HCT116 (cell line): ENCODE measurements at regions of chr16 and their contacts with region 1.

Region 1: DNA sequence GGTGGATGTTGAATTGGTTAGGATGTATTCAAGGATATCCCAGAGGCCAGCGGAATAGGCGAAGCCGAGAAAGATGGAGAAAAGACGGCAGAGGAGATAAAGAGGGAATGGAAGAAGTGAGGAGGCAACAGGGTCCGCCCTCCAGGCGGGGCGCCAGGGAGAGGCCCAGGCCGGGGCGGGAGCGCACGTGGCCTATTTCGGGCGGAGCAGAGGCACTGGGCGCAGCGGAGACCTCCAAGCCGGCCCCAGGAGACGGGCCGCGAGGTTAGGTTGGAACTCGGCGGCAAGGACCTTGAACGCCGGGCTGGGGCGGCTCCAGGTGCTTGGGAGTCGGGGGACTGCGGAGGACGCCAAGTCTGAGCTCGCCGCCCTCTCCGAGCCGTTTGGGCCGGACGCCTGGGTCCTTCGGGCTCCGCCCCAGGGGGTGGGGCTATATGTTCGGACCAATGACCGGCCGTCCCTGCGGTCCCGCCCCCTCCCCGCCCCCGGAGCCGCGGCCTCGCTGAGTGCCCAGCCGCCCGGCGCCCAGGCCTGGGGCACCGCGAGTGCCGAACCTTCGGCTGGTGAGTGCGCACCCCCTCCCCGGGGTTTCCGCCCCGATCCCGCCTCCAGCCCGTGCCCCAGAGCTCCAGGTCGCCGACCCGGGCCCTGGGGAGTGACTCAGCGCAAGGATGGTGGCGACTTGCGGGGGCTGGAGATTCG is at the start of gene ZNF771:
- DNase-seq: peak; percentile 73
- ATAC-seq: peak; percentile 87
- H3K4me3 ChIP-seq: peak within 1 kb of the TSS; percentile 80 to 93
- H3K27ac ChIP-seq: peak within 1 kb of the TSS; percentile 87
- H3K4me1 ChIP-seq: peaks cover 18 to 26% of the 10 kb centered on the region in 2 experiments
- H3K27me3 ChIP-seq: no peaks in the 10 kb centered on the region
- CTCF ChIP-seq: no peak
- POLR2A ChIP-seq: peak; percentile 35
- RAD21 ChIP-seq: no peak
- total RNA-seq, gene ZNF771: 11.0 TPM

Region 2: DNA sequence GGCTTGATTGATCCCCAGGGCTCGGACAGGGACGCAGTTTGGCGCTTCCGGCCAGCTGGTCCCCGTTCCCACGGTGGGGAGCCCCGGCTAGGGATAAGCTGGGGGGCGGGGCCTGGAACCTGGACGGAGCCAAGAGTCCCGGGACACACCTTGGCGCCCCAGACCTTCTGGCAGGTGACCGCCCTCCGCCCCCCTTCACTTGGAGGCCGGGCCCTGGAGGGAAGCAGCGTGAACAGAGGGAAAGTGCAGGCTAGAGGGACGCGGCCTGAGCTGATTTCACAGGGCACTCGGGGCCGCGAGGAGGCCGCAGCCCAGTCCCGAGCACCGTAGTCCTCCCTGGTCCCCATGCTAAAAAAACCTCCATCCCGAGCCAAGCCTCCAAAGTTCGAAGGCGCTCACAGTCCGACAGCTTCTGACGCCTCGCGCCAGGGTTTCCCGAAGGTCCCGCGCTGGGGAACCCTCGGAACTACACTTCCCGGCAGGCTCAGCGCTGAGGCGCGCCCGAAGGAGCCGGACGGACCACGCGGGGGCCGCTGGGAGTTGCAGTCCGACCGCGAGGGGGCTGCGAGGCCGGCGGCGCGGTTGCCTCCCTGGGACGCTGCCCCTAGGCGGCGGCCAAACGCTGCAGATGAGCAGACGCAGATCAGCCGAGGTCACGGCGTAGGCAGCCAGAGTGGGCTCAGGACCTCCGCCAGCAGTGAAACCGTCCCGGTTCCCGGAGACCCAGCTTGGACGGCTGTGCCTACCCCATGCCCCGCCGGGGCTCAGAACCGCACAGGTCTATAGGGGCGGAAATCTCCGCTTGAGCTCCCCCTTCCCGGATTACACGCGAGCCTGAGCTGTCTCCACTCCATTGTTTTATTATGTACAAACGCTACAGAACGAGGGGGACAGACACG is 315.5 kb before region 1 on chr16 and contains the start of gene TBX6:
- CTCF ChIA-PET with region 1: interaction called, 4 read pairs
- POLR2A ChIA-PET with region 1: interaction called, 3 read pairs
- RAD21 ChIA-PET with region 1: no interaction called
- intact Hi-C with region 1: loop called (anchors 5 kb)
- DNase-seq: peak; percentile 74
- ATAC-seq: peak; percentile 89
- H3K4me3 ChIP-seq: peak within 1 kb of the TSS; percentile 62 to 68
- H3K27ac ChIP-seq: peak within 1 kb of the TSS; percentile 77
- H3K4me1 ChIP-seq: peaks cover 14 to 62% of the 10 kb centered on the region in 2 experiments
- H3K27me3 ChIP-seq: no peaks in the 10 kb centered on the region
- CTCF ChIP-seq: peak; percentile 44 to 76 (median 63); a peak in 5 of 6 replicates
- POLR2A ChIP-seq: peak; percentile 4
- RAD21 ChIP-seq: peak; percentile 86
- total RNA-seq, gene TBX6: 1.4 TPM

Region 3: GRCh38 chr16:30142672-30143346 is 264.4 kb before region 1 on chr16:
- CTCF ChIA-PET with region 1: interaction called, 10 read pairs
- POLR2A ChIA-PET with region 1: no interaction called
- RAD21 ChIA-PET with region 1: interaction called in 1 of 2 experiments, 4 read pairs
- intact Hi-C with region 1: no loop called
- DNase-seq: no peak
- ATAC-seq: peak; percentile 81
- H3K4me3 ChIP-seq: no peak overlapping the region
- H3K27ac ChIP-seq: no peak overlapping the region
- H3K4me1 ChIP-seq: no peaks in the 10 kb centered on the region
- H3K27me3 ChIP-seq: no peaks in the 10 kb centered on the region
- CTCF ChIP-seq: peak; percentile 25 to 58 (median 48); a peak in 4 of 6 replicates
- POLR2A ChIP-seq: no peak
- RAD21 ChIP-seq: peak; percentile 81

Region 4: DNA sequence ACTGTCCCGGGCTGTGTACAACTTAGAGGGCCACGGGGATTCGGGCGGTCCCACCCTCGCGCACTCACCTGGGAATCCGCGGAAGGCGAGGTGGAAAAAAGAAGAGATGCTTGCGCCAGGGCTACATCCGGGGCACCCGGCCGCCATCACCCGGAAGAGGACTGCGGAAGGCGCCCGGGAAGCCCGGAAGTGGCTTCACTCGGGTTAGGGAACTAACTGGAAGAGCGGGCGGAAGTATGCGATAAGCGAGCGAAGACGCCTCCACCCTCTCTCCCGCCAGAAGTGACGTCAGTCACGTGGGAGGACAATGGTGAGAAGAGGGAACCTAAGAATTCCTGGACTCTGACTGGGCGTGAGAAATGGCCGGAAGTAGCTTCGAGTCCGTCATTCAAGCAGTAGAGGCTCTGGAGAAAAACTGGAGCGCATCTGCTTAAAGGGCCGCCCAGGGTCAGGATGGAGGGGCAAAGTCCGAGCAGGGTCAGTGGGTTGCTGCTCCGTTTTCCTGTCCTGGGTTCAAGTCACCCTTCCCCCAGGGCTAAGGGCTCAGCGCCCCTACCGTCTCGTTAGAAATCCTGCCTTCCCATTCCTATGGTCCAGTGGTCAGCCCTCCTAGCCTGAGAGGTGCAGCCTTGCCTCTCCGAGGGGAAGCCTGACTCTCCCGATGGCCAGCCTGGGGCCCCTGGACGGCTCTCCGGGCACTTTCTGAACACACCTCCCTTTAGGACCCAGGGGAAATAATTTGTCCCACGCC is 51.9 kb before region 1 on chr16 and contains the start of gene CD2BP2:
- CTCF ChIA-PET with region 1: interaction called, 10 read pairs
- POLR2A ChIA-PET with region 1: no interaction called
- RAD21 ChIA-PET with region 1: no interaction called
- intact Hi-C with region 1: no loop called
- DNase-seq: peak; percentile 99
- ATAC-seq: peak; percentile 81
- H3K4me3 ChIP-seq: peak within 1 kb of the TSS; percentile 86 to 92
- H3K27ac ChIP-seq: peak within 1 kb of the TSS; percentile 92
- H3K4me1 ChIP-seq: peaks cover 39 to 54% of the 10 kb centered on the region in 2 experiments
- H3K27me3 ChIP-seq: no peaks in the 10 kb centered on the region
- CTCF ChIP-seq: 0 out of 6 replicates have a peak, but pooled peaks of 1 of the 3 experiments have one; percentile 18
- POLR2A ChIP-seq: no peak
- RAD21 ChIP-seq: no peak; the same call in 1 of the 2 replicates
- total RNA-seq, gene CD2BP2: 51.8 TPM

Region 5: GRCh38 chr16:30370444-30371247 is 36.6 kb before region 1 on chr16 and contains the start of gene TBC1D10B:
- CTCF ChIA-PET with region 1: interaction called, 17 read pairs
- POLR2A ChIA-PET with region 1: interaction called, 9 read pairs
- RAD21 ChIA-PET with region 1: interaction called in 1 of 2 experiments, 3 read pairs
- intact Hi-C with region 1: loop called (anchors 2 kb)
- DNase-seq: peak; percentile 100
- ATAC-seq: peak; percentile 88
- H3K4me3 ChIP-seq: peak within 1 kb of the TSS; percentile 79 to 87
- H3K27ac ChIP-seq: peak within 1 kb of the TSS; percentile 84
- H3K4me1 ChIP-seq: peaks cover 18 to 30% of the 10 kb centered on the region in 2 experiments
- H3K27me3 ChIP-seq: no peaks in the 10 kb centered on the region
- CTCF ChIP-seq: peak in 1 of 3 experiments; percentile 30; a peak in 1 of 6 replicates
- POLR2A ChIP-seq: no peak
- RAD21 ChIP-seq: no peak
- total RNA-seq, gene TBC1D10B: 49.2 TPM

Region 6: GRCh38 chr16:30395155-30395991 is 11.9 kb before region 1 on chr16 and contains the start of gene ZNF48:
- CTCF ChIA-PET with region 1: interaction called, 19 read pairs
- POLR2A ChIA-PET with region 1: interaction called, 10 read pairs
- RAD21 ChIA-PET with region 1: interaction called in 1 of 2 experiments, 3 read pairs
- intact Hi-C with region 1: no loop called
- DNase-seq: peak; percentile 77
- ATAC-seq: peak; percentile 83
- H3K4me3 ChIP-seq: peak within 1 kb of the TSS; percentile 95 to 96
- H3K27ac ChIP-seq: peak within 1 kb of the TSS; percentile 97
- H3K4me1 ChIP-seq: peaks cover 27 to 50% of the 10 kb centered on the region in 2 experiments
- H3K27me3 ChIP-seq: no peaks in the 10 kb centered on the region
- CTCF ChIP-seq: peak in 1 of 3 experiments; percentile 28; a peak in 2 of 6 replicates
- POLR2A ChIP-seq: no peak
- RAD21 ChIP-seq: peak; percentile 33; the same call in 1 of the 2 replicates
- total RNA-seq, gene ZNF48: 17.9 TPM

Region 7: DNA sequence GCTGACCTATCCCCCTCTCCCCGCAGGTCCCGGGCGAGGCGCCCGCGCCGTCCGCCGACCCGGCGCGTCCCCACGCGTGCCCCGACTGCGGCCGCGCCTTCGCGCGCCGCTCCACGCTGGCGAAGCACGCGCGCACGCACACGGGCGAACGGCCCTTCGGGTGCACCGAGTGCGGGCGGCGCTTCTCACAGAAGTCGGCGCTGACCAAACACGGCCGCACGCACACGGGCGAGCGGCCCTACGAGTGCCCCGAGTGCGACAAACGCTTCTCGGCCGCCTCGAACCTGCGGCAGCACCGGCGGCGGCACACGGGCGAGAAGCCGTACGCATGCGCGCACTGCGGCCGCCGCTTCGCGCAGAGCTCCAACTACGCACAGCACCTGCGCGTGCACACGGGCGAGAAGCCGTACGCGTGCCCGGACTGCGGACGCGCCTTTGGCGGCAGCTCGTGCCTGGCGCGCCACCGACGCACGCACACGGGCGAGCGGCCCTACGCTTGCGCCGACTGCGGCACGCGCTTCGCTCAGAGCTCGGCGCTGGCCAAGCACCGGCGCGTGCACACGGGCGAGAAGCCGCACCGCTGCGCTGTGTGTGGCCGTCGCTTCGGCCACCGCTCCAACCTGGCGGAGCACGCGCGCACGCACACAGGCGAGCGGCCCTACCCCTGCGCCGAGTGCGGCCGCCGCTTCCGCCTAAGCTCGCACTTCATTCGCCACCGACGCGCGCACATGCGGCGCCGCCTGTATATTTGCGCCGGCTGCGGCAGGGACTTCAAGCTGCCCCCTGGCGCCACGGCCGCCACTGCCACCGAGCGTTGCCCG is 10.5 kb after region 1 on chr16:
- CTCF ChIA-PET with region 1: interaction called, 34 read pairs
- POLR2A ChIA-PET with region 1: interaction called, 10 read pairs
- RAD21 ChIA-PET with region 1: interaction called, 3 read pairs
- intact Hi-C with region 1: no loop called
- DNase-seq: peak; percentile 91
- ATAC-seq: peak; percentile 91
- H3K4me3 ChIP-seq: peak overlapping the region; percentile 26 to 44
- H3K27ac ChIP-seq: peak overlapping the region; percentile 83
- H3K4me1 ChIP-seq: peaks cover 6 to 39% of the 10 kb centered on the region in 2 experiments; a peak in 3 of 4 replicates
- H3K27me3 ChIP-seq: no peaks in the 10 kb centered on the region
- CTCF ChIP-seq: peak in 1 of 3 experiments; percentile 35; a peak in 1 of 6 replicates
- POLR2A ChIP-seq: peak; percentile 13
- RAD21 ChIP-seq: no peak